ENCODE measurements at regions of chr10 and their contacts with region 1.

Region 1: DNA sequence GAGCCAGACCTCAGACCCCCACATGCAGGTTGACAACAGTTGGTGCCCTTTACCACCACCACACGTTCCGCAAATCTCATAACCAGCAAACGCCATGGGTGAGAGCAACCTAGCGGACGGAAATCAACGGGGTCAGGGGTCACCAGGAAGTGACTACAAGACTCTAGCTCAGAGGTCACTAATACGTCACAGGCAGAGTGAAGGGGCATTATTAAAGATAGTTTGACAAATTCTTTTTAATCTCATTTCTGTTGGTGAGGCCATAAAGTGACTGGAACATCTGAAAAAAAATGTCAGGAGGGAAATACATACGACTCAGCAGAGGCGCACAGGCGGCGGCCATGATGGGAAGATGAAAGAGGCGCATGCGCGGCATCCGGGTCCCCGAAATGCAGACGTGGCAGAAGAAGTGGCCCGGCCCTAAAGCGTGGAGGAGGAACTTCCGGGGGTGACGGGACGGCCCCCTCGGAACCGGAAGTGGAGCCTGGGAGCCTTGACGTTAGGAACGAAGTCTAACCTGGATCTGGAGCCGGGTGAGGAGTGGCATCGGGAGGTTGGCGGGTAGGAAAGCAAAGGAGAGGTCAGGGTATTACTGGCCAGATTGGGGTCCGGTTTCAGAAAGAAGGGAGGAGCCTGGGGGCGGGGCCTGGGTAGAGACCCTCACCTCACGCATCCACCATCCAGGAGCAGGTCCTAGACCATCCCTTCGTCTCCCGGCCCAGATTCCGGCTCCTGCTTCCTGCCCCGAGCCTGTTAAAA is at the start of gene SEC24C:
- DNase-seq: peak; percentile 94
- H3K4me3 ChIP-seq: peak within 1 kb of the TSS; percentile 75 to 91 (median 83)
- H3K27ac ChIP-seq: peak within 1 kb of the TSS; percentile 86
- H3K4me1 ChIP-seq: peaks cover 6% of the 10 kb centered on the region
- H3K27me3 ChIP-seq: no peaks in the 10 kb centered on the region
- CTCF ChIP-seq: no peak
- total RNA-seq, gene SEC24C: 48.0 to 68.0 TPM

Region 2: GRCh38 chr10:73730153-73730906 is 13.8 kb before region 1 on chr10:
- CTCF ChIA-PET with region 1: no interaction called
- dilution Hi-C with region 1: no loop called
- in situ Hi-C with region 1: no loop called
- intact Hi-C with region 1: loop called (anchors 1 kb)
- DNase-seq: peak; percentile 95
- H3K4me3 ChIP-seq: peak overlapping the region; percentile 81 to 94 (median 82)
- H3K27ac ChIP-seq: peak overlapping the region; percentile 68
- H3K4me1 ChIP-seq: peaks cover 4% of the 10 kb centered on the region
- H3K27me3 ChIP-seq: no peaks in the 10 kb centered on the region
- CTCF ChIP-seq: no peak

Region 3: DNA sequence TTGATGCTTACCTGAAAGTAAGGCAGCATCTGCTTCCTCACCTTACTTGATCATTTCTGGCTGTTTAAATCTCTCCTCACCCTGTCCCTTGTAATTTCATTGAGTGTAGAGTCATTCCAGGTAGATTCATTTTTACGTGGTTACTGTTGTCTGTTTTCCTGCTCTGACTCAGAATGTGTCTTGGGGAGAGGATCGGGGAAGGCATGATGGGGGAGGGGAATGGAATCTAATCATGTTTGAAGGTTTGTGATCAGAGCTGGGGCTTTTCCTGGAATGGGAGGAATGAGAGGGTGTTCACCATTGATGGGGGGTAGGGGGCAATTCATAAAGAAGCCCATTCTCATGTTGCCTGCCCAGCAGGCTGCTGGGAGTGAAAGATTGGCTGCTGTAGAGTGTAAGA is 18.8 kb after region 1 on chr10:
- CTCF ChIA-PET with region 1: no interaction called
- dilution Hi-C with region 1: no loop called
- in situ Hi-C with region 1: no loop called
- intact Hi-C with region 1: loop called (anchors 2 kb)
- DNase-seq: peak; percentile 80
- H3K4me3 ChIP-seq: no peak overlapping the region
- H3K27ac ChIP-seq: peak overlapping the region; percentile 78
- H3K4me1 ChIP-seq: peaks cover 18% of the 10 kb centered on the region
- H3K27me3 ChIP-seq: no peaks in the 10 kb centered on the region
- CTCF ChIP-seq: no peak

Region 4: DNA sequence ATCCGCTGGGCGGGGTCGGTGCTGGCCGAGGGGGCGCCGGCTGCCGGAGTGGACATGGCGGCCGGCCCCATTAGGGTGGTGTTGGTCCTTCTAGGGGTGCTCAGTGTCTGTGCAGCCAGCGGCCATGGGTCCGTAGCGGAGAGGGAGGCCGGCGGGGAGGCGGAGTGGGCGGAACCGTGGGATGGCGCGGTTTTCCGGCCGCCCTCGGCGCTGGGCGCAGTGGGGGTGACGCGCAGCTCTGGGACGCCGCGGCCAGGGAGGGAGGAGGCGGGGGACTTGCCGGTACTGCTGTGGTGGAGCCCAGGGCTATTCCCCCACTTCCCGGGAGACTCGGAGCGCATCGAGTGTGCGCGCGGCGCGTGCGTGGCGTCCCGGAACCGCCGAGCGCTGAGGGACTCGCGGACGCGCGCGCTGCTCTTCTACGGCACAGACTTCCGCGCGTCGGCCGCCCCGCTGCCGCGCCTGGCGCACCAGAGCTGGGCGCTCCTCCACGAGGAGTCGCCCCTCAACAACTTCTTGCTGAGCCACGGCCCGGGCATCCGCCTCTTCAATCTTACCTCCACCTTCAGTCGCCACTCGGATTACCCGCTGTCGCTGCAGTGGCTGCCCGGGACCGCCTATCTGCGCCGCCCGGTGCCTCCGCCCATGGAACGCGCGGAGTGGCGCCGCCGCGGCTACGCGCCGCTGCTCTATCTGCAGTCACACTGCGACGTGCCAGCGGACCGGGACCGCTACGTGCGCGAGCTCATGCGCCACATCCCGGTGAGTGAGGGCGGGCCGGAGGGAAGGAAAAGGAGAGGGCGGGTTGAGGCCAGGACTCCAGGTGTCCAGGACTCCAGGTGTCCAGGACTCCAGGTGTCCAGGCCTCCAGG is 28.4 kb after region 1 on chr10:
- CTCF ChIA-PET with region 1: no interaction called
- dilution Hi-C with region 1: no loop called
- in situ Hi-C with region 1: no loop called
- intact Hi-C with region 1: loop called (anchors 1 kb)
- DNase-seq: peak; percentile 92
- H3K4me3 ChIP-seq: peak overlapping the region; percentile 75 to 92 (median 84)
- H3K27ac ChIP-seq: peak overlapping the region; percentile 76
- H3K4me1 ChIP-seq: peaks cover 30% of the 10 kb centered on the region
- H3K27me3 ChIP-seq: no peaks in the 10 kb centered on the region
- CTCF ChIP-seq: peak in 1 of 2 donors; percentile 5

Region 5: DNA sequence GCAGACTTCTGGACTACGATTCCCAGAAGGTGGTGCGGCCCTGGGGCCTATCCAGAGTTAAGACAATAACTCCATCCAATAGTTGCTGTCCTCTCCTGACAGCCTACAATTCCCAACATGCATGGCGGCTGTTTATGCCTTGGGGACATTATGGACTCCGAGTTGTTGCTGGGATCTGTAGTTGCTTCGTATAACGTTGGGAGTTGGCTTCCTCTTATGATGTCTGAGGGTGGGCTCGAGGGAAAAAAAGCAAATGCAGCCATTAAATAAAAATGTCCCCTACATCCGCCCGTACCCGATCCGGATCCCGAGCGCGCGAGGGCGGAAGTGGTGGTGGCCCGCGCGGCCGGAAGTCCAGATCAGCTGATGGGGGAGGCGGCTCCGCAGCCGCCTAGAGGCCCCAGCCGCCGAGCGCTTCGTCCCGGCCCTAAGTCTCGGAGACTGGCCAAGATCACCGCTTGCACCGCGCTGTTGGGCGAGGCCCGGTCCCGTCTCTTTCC is 41.2 kb after region 1 on chr10 and contains the start of gene ZSWIM8:
- CTCF ChIA-PET with region 1: no interaction called
- dilution Hi-C with region 1: no loop called
- in situ Hi-C with region 1: no loop called
- intact Hi-C with region 1: loop called (anchors 1 kb)
- DNase-seq: peak; percentile 93
- H3K4me3 ChIP-seq: peak within 1 kb of the TSS; percentile 73 to 92 (median 83)
- H3K27ac ChIP-seq: peak within 1 kb of the TSS; percentile 46
- H3K4me1 ChIP-seq: peaks cover 20% of the 10 kb centered on the region
- H3K27me3 ChIP-seq: no peaks in the 10 kb centered on the region
- CTCF ChIP-seq: no peak
- total RNA-seq, gene ZSWIM8: 62.5 to 67.6 TPM

Region 6: DNA sequence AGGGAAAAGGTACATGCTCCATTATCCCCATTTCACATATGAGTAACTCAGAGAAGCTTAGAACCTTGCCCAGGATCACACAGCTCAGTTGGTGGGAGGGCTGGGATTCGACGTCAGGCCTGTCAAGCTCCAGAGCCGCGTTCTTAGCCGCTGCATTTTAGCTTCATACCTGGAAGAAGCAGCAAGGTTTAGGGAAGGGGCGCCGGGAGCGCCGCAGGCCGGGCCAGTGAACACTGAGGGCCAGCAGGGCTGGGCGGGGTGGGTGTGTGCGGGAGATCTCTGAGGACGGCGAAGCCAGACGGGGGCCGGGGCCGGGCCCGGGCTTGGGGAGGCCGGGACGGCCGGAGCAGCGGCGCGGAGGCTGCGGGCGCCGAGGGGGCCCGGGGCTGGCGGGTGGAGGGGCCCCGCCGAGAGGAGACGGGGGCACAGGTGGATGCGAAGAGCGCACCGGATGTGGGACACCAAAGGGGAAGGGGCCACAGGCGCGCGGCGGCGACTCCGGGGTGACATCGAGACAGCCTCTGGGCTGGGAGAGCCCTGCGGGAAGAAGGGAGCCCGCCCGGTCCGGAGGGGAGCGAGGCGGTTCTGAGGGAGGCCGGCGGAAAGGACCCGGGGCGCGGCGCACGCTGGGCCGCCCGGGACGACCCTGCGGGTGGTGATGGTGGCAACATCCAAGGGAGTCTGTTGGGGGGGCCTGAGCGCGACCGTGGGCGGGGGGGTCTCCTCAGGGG is 66.8 kb after region 1 on chr10:
- CTCF ChIA-PET with region 1: no interaction called
- dilution Hi-C with region 1: no loop called
- in situ Hi-C with region 1: no loop called
- intact Hi-C with region 1: loop called (anchors 2 kb)
- DNase-seq: no peak
- H3K4me3 ChIP-seq: peak overlapping the region; percentile 75 to 80 (median 80)
- H3K27ac ChIP-seq: peak overlapping the region; percentile 59
- H3K4me1 ChIP-seq: peaks cover 7% of the 10 kb centered on the region
- H3K27me3 ChIP-seq: no peaks in the 10 kb centered on the region
- CTCF ChIP-seq: no peak

Region 7: GRCh38 chr10:74151056-74151878 is 407.2 kb after region 1 on chr10 and contains the start of gene ADK:
- CTCF ChIA-PET with region 1: no interaction called
- dilution Hi-C with region 1: no loop called
- in situ Hi-C with region 1: no loop called
- intact Hi-C with region 1: no loop called
- DNase-seq: peak; percentile 95
- H3K4me3 ChIP-seq: peak within 1 kb of the TSS; percentile 81 to 90 (median 82)
- H3K27ac ChIP-seq: peak within 1 kb of the TSS; percentile 97
- H3K4me1 ChIP-seq: peaks cover 25% of the 10 kb centered on the region
- H3K27me3 ChIP-seq: no peaks in the 10 kb centered on the region
- CTCF ChIP-seq: peak in 1 of 2 donors; percentile 40
- total RNA-seq, gene ADK: 87.9 to 120 TPM

Region 8: DNA sequence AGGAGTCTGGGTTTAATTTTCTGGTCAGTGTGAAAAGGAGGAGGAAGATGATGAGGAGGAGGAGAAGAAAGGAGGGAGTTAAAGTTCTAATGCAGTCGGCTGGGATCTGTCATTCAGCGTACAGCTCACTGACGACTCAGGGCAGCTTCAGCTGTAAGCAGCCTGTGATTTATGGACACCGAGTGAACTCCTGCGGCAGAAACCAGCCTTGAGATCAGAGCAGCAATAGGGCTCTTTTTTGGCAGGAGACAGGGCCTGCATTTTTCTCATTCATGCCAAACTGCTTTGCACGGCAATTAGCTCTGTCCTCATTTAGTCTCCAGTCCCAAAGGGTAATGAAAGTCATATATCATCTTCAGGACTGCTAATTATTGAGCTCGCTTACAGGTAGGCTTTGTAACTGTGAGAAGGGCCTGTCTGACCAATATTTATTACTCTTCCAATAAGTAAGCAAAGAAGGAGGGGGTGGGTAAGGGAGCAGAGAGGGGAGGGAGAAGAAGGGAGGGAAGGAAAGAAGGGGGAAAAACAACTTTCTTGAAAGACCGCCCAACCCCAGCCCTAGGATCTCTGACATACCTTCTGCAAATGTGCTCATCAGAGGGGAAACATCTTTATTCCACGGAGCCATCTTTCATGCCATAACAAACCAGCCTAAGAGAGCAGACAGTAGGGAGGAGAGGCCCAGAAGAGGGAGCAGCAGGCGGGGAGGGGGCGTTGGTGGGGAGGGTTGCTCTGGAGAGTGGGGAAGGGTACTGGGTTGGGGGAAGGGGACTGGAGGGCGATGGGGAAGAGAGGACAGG is 1539.8 kb after region 1 on chr10:
- CTCF ChIA-PET with region 1: no interaction called
- dilution Hi-C with region 1: no loop called
- in situ Hi-C with region 1: no loop called
- intact Hi-C with region 1: no loop called
- DNase-seq: peak; percentile 14
- H3K4me3 ChIP-seq: no peak overlapping the region
- H3K27ac ChIP-seq: no peak overlapping the region
- H3K4me1 ChIP-seq: peaks cover 4% of the 10 kb centered on the region
- H3K27me3 ChIP-seq: no peaks in the 10 kb centered on the region
- CTCF ChIP-seq: no peak